AG04449 (cell line): ENCODE measurements at regions of chr1 and their contacts with region 1.

Region 1: DNA sequence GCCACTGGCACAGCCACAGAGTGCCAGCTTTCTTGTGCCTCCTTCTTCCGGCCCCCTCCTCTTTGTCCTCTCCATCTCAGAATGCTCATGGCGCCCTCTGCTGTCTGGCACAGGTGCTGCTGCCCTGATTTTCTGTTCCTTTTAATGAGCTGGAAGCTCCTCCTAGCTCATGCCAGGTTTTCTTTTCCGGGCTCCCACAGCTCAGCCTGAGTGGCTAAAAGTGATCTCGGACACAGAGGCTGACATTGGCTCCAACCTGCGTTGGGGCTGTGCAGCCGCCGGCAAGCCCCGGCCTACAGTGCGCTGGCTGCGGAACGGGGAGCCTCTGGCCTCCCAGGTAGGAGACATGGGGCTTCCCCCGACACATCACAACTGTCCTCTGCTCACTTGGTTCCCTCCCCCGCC is 18.7 kb downstream of the CNTN2 start:
- DNase-seq: no peak
- H3K4me3 ChIP-seq: no peak overlapping the region
- CTCF ChIP-seq: peak; percentile 90

Region 2: GRCh38 chr1:204989266-204990058 is 72.2 kb before region 1 on chr1:
- CTCF ChIA-PET with region 1: interaction called, 262 read pairs
- POLR2A ChIA-PET with region 1: no interaction called
- DNase-seq: peak; percentile 17
- H3K4me3 ChIP-seq: no peak overlapping the region
- CTCF ChIP-seq: peak; percentile 98

Region 3: GRCh38 chr1:205013683-205014367 is 47.8 kb before region 1 on chr1:
- CTCF ChIA-PET with region 1: interaction called, 15 read pairs
- POLR2A ChIA-PET with region 1: no interaction called
- DNase-seq: no peak
- H3K4me3 ChIP-seq: no peak overlapping the region
- CTCF ChIP-seq: no peak

Region 4: GRCh38 chr1:205042911-205043806 is 18.5 kb before region 1 on chr1 and contains the start of gene CNTN2:
- CTCF ChIA-PET with region 1: interaction called, 90 read pairs
- POLR2A ChIA-PET with region 1: no interaction called
- DNase-seq: no peak
- H3K4me3 ChIP-seq: no peak within 1 kb of the TSS
- CTCF ChIP-seq: no peak

Region 5: DNA sequence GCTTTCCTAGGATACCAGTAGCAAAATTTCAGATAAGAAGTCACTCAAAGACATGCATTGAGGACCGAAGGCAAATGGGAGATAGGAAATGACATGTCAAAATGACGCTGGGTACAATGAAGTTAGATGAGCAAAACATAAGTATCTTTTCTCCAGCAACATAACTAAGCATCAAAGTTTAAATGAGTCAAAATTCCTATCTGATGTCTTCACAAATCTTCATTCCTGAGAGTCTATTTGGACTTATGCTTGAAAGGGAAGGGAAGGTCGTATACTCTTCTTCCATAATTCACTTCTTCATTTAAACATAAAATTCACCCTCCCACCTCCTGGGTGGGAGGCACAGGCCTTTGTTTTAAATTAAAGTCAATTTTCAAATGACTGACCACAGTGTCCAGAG is 26.7 kb after region 1 on chr1:
- CTCF ChIA-PET with region 1: interaction called, 103 read pairs
- POLR2A ChIA-PET with region 1: no interaction called
- DNase-seq: no peak
- H3K4me3 ChIP-seq: no peak overlapping the region
- CTCF ChIP-seq: no peak

Region 6: DNA sequence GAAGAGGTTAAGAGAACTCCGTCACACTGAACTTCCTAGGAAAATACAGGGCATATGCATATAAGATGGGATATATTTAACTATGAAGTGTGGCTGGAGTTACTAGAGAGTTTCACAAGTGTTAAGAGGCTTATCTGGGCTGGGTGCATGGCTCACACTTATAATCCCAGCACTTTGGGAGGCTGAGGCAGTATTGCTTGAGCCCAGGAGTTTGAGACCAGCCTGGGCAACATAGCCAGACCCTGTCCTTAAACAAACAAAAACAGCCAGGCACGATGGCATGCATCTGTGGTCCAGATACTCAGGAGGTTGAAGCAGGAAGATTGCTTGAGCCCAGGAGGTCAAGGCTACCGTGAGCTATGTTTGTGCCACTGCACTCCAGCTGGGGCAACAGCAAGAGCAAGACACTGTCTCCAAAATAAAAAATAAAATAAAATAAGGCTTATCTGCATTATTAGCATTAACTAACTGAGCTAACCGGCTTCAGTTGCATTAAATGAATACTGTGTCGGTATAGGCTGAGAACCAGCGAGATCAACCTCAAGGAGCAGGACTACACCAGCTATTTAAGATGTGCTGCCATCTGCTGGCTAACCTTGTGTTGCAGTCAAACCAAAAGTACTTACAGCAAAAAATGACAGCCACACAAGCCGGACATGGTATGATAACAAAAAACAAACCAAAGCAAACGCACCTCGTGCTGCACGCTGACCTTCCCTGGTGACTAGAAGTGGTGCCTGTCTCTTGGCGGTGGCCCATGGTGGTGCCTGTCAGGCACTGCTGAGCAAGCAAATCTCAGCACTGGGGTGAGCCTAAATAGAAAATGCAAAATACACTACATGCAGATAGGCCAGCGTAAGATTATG is 79.8 kb after region 1 on chr1:
- CTCF ChIA-PET with region 1: interaction called, 12 read pairs
- POLR2A ChIA-PET with region 1: no interaction called
- DNase-seq: peak; percentile 45
- H3K4me3 ChIP-seq: no peak overlapping the region
- CTCF ChIP-seq: peak; percentile 64

Region 7: GRCh38 chr1:205306929-205307566 is 245.4 kb after region 1 on chr1:
- CTCF ChIA-PET with region 1: no interaction called
- POLR2A ChIA-PET with region 1: no interaction called
- DNase-seq: no peak
- H3K4me3 ChIP-seq: no peak overlapping the region
- CTCF ChIP-seq: no peak